ENCODE measurements at regions of chr7 and their contacts with region 1.

Region 1: DNA sequence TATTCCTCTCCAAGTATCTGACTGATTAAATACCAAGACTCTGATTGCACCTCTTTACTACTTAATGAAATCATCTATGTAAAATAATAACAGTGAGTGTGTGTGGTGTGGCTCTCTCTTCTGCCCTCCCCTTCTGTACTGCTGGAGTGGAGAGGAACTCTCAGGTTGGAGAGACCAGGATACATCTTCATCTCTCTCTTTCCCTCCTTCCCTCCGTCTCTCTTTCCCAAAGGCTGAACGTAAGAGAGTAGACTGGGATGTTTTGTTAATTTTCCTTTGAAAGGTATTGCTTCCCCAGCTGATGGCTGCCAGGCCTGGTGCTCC is 272 bp upstream of the GJC3 start:
- DNase-seq: no peak
- ATAC-seq: no peak
- H3K4me3 ChIP-seq: peak overlapping the region in 2 of 3 donors; percentile 22 to 42
- H3K27ac ChIP-seq: peak overlapping the region in 1 of 3 donors; percentile 2
- H3K4me1 ChIP-seq: peaks cover 0 to 4% (median 0%) of the 10 kb centered on the region in 4 donors
- H3K27me3 ChIP-seq: no peaks in the 10 kb centered on the region
- CTCF ChIP-seq: no peak
- POLR2A ChIP-seq: no peak

Region 2: GRCh38 chr7:99984593-99984992 is 54.9 kb after region 1 on chr7:
- intact Hi-C with region 1: loop called (anchors 10 kb)
- DNase-seq: no peak
- ATAC-seq: peak in 1 of 4 donors; percentile 4
- H3K4me3 ChIP-seq: no peak overlapping the region
- H3K27ac ChIP-seq: no peak overlapping the region
- H3K4me1 ChIP-seq: peaks cover 0 to 20% (median under 1%) of the 10 kb centered on the region in 4 donors
- H3K27me3 ChIP-seq: no peaks in the 10 kb centered on the region
- CTCF ChIP-seq: no peak
- POLR2A ChIP-seq: no peak